IMR-90 (cell line): ENCODE measurements at regions of chr11 and their contacts with region 1.

Region 1: GRCh38 chr11:102914238-102915043 is 39.7 kb upstream of the MMP12 start:
- DNase-seq: peak; percentile 56
- ATAC-seq: peak; percentile 88
- H3K4me3 ChIP-seq: no peak overlapping the region
- H3K27ac ChIP-seq: no peak overlapping the region
- H3K4me1 ChIP-seq: no peaks in the 10 kb centered on the region
- H3K27me3 ChIP-seq: no peaks in the 10 kb centered on the region; the same call in 1 of the 2 replicates
- CTCF ChIP-seq: peak; percentile 68
- POLR2A ChIP-seq: no peak
- RAD21 ChIP-seq: peak; percentile 68

Region 2: GRCh38 chr11:102187416-102188151 is 726.9 kb before region 1 on chr11:
- CTCF ChIA-PET with region 1: no interaction called
- POLR2A ChIA-PET with region 1: no interaction called
- dilution Hi-C with region 1: no loop called
- in situ Hi-C with region 1: no loop called
- intact Hi-C with region 1: no loop called
- DNase-seq: peak; percentile 35
- ATAC-seq: no peak
- H3K4me3 ChIP-seq: no peak overlapping the region
- H3K27ac ChIP-seq: peak overlapping the region; percentile 63
- H3K4me1 ChIP-seq: peaks cover 16% of the 10 kb centered on the region
- H3K27me3 ChIP-seq: no peaks in the 10 kb centered on the region
- CTCF ChIP-seq: no peak
- POLR2A ChIP-seq: no peak
- RAD21 ChIP-seq: no peak

Region 3: DNA sequence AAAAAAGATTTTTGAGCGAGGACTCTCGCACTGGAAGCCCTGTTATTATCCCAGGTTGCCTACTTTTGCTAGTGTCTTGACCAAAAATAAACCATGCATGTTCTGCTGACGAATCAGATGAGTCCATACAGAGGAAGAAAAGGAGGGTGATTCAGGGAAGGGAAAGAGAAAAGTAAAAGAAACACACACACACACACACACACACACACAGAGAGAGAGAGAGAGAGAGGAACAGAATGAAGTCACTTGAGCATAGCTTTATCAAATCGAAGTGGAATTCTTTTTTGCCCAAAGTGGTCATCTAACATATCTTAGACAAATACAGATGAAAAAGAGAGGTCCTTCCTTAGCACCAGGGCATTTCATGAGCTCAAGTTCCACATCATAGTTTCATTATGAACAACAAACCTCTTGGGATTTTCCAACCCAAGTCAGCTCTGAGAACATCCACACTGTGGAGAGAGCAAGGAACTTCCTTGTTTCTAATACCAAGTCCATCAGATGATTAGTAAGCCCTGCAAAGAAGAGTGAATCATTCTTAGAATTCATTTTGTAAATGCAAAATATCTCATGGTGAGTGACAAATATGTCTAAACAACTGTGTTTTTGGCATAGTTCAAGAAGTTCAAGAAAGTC is 31.9 kb before region 1 on chr11:
- CTCF ChIA-PET with region 1: interaction called, 12 read pairs
- POLR2A ChIA-PET with region 1: no interaction called
- dilution Hi-C with region 1: no loop called
- in situ Hi-C with region 1: no loop called
- intact Hi-C with region 1: no loop called
- DNase-seq: peak; percentile 48
- ATAC-seq: peak; percentile 69
- H3K4me3 ChIP-seq: no peak overlapping the region
- H3K27ac ChIP-seq: no peak overlapping the region
- H3K4me1 ChIP-seq: no peaks in the 10 kb centered on the region
- H3K27me3 ChIP-seq: peaks cover 11% of the 10 kb centered on the region
- CTCF ChIP-seq: no peak
- POLR2A ChIP-seq: no peak
- RAD21 ChIP-seq: no peak

Region 4: GRCh38 chr11:102940714-102941588 is 26.5 kb after region 1 on chr11:
- CTCF ChIA-PET with region 1: interaction called, 3 read pairs
- POLR2A ChIA-PET with region 1: no interaction called
- dilution Hi-C with region 1: no loop called
- in situ Hi-C with region 1: no loop called
- intact Hi-C with region 1: loop called (anchors 1 kb)
- DNase-seq: peak; percentile 73
- ATAC-seq: peak; percentile 88
- H3K4me3 ChIP-seq: no peak overlapping the region
- H3K27ac ChIP-seq: no peak overlapping the region
- H3K4me1 ChIP-seq: no peaks in the 10 kb centered on the region
- H3K27me3 ChIP-seq: peaks cover 1% of the 10 kb centered on the region
- CTCF ChIP-seq: peak; percentile 80
- POLR2A ChIP-seq: no peak
- RAD21 ChIP-seq: peak; percentile 80

Region 5: GRCh38 chr11:102974552-102975291 is 60.3 kb after region 1 on chr11:
- CTCF ChIA-PET with region 1: interaction called, 10 read pairs
- POLR2A ChIA-PET with region 1: no interaction called
- dilution Hi-C with region 1: no loop called
- in situ Hi-C with region 1: no loop called
- intact Hi-C with region 1: no loop called
- DNase-seq: peak; percentile 84
- ATAC-seq: peak; percentile 88
- H3K4me3 ChIP-seq: no peak overlapping the region
- H3K27ac ChIP-seq: no peak overlapping the region
- H3K4me1 ChIP-seq: peaks cover 4% of the 10 kb centered on the region; the same call in 1 of the 2 replicates
- H3K27me3 ChIP-seq: no peaks in the 10 kb centered on the region
- CTCF ChIP-seq: no peak
- POLR2A ChIP-seq: no peak
- RAD21 ChIP-seq: no peak

Region 6: GRCh38 chr11:102989379-102990047 is 75.1 kb after region 1 on chr11:
- CTCF ChIA-PET with region 1: no interaction called
- POLR2A ChIA-PET with region 1: no interaction called
- dilution Hi-C with region 1: no loop called
- in situ Hi-C with region 1: no loop called
- intact Hi-C with region 1: loop called (anchors 2 kb)
- DNase-seq: peak; percentile 79
- ATAC-seq: peak; percentile 88
- H3K4me3 ChIP-seq: no peak overlapping the region
- H3K27ac ChIP-seq: peak overlapping the region; percentile 58
- H3K4me1 ChIP-seq: peaks cover 7% of the 10 kb centered on the region
- H3K27me3 ChIP-seq: no peaks in the 10 kb centered on the region
- CTCF ChIP-seq: no peak
- POLR2A ChIP-seq: no peak
- RAD21 ChIP-seq: no peak

Region 7: GRCh38 chr11:103055221-103055890 is 140.9 kb after region 1 on chr11:
- CTCF ChIA-PET with region 1: interaction called, 5 read pairs
- POLR2A ChIA-PET with region 1: no interaction called
- dilution Hi-C with region 1: no loop called
- in situ Hi-C with region 1: loop called (anchors 5 kb)
- intact Hi-C with region 1: loop called (anchors 1 kb)
- DNase-seq: peak; percentile 65
- ATAC-seq: peak; percentile 52
- H3K4me3 ChIP-seq: no peak overlapping the region
- H3K27ac ChIP-seq: no peak overlapping the region
- H3K4me1 ChIP-seq: no peaks in the 10 kb centered on the region
- H3K27me3 ChIP-seq: no peaks in the 10 kb centered on the region
- CTCF ChIP-seq: peak; percentile 78
- POLR2A ChIP-seq: no peak
- RAD21 ChIP-seq: peak; percentile 79